Mammary epithelial cell (primary cell): ENCODE measurements at regions of chr7 and their contacts with region 1.

Region 1: DNA sequence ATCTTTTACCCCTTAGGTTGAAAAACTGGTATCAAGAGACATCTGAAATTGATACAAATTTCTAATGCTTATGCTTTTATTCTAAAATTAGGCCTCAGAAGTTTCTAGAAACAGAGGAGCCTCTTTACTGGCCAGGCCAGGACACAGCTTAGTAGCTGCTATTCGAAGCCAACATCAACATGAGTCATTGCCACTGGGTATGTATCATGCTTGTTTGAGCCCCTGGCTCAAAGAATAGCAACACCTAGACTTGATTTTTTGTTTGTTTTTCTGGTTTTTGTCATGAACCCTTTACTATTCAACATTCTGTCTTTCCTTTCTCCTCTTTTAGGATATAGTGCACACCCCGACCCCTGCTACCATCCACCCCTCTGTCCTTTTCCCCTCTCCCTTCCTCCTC is 90.9 kb upstream of the STK17A start:
- DNase-seq: peak; percentile 80
- H3K4me3 ChIP-seq: no peak overlapping the region
- H3K27ac ChIP-seq: no peak overlapping the region
- H3K4me1 ChIP-seq: peaks cover 4% of the 10 kb centered on the region
- H3K27me3 ChIP-seq: peaks cover 27% of the 10 kb centered on the region
- CTCF ChIP-seq: no peak

Region 2: GRCh38 chr7:42537066-42537465 is 954.9 kb before region 1 on chr7:
- CTCF ChIA-PET with region 1: no interaction called
- dilution Hi-C with region 1: no loop called
- in situ Hi-C with region 1: no loop called
- intact Hi-C with region 1: no loop called
- DNase-seq: no peak
- H3K4me3 ChIP-seq: no peak overlapping the region
- H3K27ac ChIP-seq: no peak overlapping the region
- H3K4me1 ChIP-seq: no peaks in the 10 kb centered on the region
- H3K27me3 ChIP-seq: no peaks in the 10 kb centered on the region
- CTCF ChIP-seq: peak in 1 of 2 donors; percentile 8

Region 3: DNA sequence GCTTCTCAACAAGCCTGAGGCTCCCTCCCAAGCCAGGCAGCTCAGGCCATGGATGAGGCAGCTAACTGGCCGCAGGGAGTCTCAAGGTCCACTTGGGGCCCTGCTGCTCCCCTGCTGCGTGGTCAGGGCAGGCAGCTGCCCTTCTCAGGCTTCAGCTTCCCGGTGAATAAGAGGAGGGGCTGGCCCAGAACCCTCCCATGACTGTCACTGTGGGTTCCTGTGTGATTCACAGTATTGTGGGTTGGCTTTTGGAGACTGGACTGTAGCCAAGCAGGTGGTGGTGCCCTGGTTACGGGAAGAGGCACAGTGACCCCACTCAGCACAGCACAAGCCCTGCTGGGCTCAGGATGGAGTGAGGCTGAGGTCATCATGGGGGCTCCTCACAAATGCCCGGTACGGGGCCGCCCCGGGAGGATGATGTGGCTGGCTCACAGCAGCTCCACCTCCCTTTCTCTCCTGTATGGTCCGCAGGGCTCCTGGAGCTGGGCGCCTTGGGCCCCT is 189.7 kb before region 1 on chr7:
- CTCF ChIA-PET with region 1: no interaction called
- dilution Hi-C with region 1: no loop called
- in situ Hi-C with region 1: no loop called
- intact Hi-C with region 1: no loop called
- DNase-seq: peak; percentile 84
- H3K4me3 ChIP-seq: no peak overlapping the region
- H3K27ac ChIP-seq: no peak overlapping the region
- H3K4me1 ChIP-seq: peaks cover 21% of the 10 kb centered on the region
- H3K27me3 ChIP-seq: no peaks in the 10 kb centered on the region
- CTCF ChIP-seq: no peak

Region 4: DNA sequence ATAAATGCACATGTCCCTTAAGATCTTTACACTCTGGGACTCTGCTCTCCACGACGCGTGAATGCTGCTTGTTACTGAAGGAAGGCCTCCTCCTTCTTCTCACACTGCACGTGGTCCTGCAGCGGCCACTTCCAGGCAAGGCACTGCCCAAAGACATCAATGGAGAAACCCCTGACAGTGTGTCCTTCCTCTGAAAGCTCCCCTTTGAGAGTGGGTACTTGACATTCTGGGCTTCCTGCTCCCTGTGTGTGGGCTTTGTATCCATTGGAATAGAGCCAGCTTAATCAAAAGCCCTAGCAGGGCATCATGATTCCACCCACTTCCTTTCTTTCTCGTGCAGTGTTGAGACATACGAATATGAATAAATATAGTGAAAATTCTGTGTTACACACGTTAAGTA is 21.3 kb after region 1 on chr7:
- CTCF ChIA-PET with region 1: no interaction called
- dilution Hi-C with region 1: no loop called
- in situ Hi-C with region 1: no loop called
- intact Hi-C with region 1: no loop called
- DNase-seq: no peak
- H3K4me3 ChIP-seq: no peak overlapping the region
- H3K27ac ChIP-seq: no peak overlapping the region
- H3K4me1 ChIP-seq: peaks cover 17% of the 10 kb centered on the region
- H3K27me3 ChIP-seq: no peaks in the 10 kb centered on the region
- CTCF ChIP-seq: no peak

Region 5: DNA sequence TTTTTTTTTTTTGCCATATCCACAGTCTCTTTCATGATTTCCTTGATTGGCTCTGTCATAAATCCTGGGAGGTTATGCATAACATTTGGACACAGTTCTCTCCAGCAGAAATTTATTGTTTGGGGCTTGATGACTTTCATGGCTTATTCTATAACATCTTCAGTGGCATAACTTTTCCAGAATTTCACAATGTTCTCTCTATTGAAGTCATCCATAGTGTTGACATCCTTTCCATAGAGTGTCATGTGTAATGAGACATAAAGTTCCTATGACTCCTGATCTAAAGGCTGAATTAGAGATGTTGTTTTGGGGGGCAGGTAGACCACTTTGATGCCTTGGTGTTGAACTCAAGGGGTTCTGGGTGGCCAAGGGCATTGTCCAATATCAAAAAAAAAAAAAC is 54.2 kb after region 1 on chr7:
- CTCF ChIA-PET with region 1: no interaction called
- dilution Hi-C with region 1: loop called (anchors 5 kb)
- in situ Hi-C with region 1: no loop called
- intact Hi-C with region 1: no loop called
- DNase-seq: no peak
- H3K4me3 ChIP-seq: no peak overlapping the region
- H3K27ac ChIP-seq: no peak overlapping the region
- H3K4me1 ChIP-seq: no peaks in the 10 kb centered on the region
- H3K27me3 ChIP-seq: no peaks in the 10 kb centered on the region
- CTCF ChIP-seq: no peak

Region 6: DNA sequence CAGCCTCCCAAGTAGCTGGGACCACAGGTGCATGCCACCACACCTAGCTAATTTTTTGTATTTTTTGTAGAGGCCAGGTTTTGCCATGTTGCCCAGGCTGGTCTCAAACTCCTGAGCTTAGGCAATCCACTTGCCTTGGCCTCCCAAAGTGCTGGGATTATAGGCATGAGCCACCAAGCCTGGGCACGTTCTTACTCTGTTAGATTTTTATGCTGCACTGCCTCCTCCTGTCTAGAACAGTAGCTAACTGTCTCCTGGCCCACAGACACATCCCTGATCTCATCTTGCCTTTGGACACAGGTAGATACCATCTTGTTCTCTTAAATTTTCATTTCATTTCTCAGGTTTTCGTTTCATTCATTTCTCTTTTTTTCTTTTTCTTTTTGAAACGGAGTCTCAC is 307.6 kb after region 1 on chr7:
- CTCF ChIA-PET with region 1: no interaction called
- dilution Hi-C with region 1: no loop called
- in situ Hi-C with region 1: no loop called
- intact Hi-C with region 1: no loop called
- DNase-seq: peak; percentile 46
- H3K4me3 ChIP-seq: no peak overlapping the region
- H3K27ac ChIP-seq: no peak overlapping the region
- H3K4me1 ChIP-seq: no peaks in the 10 kb centered on the region
- H3K27me3 ChIP-seq: no peaks in the 10 kb centered on the region
- CTCF ChIP-seq: peak; percentile 22 to 51